Heart left ventricle (tissue), 16 donors: ENCODE measurements at regions of chr5 and their contacts with region 1.

Region 1: GRCh38 chr5:126044111-126044668 is 379.0 kb upstream of the GRAMD2B start:
- DNase-seq: peak in 4 of 5 donors; percentile 38 to 63 (median 52)
- ATAC-seq: peak; percentile 98 to 99 (median 99)
- H3K4me3 ChIP-seq: peak overlapping the region in 5 of 12 donors; percentile 8 to 20 (median 12)
- H3K27ac ChIP-seq: peak overlapping the region; percentile 24 to 87 (median 82)
- H3K4me1 ChIP-seq: peaks cover 0 to 21% (median 8%) of the 10 kb centered on the region in 12 donors
- H3K27me3 ChIP-seq: no peaks in the 10 kb centered on the region
- CTCF ChIP-seq: no peak
- POLR2A ChIP-seq: peak in 1 of 2 donors; percentile 19

Region 2: GRCh38 chr5:126002222-126002897 is 41.8 kb before region 1 on chr5:
- intact Hi-C with region 1: loop called in 1 of 10 experiments (anchors 5 kb)
- DNase-seq: peak; percentile 69 to 83 (median 75)
- ATAC-seq: peak; percentile 85 to 97 (median 94)
- H3K4me3 ChIP-seq: no peak overlapping the region
- H3K27ac ChIP-seq: peak overlapping the region in 11 of 12 donors; percentile 32 to 80 (median 63)
- H3K4me1 ChIP-seq: peaks cover 9 to 43% (median 22%) of the 10 kb centered on the region in 12 donors
- H3K27me3 ChIP-seq: no peaks in the 10 kb centered on the region
- CTCF ChIP-seq: no peak
- POLR2A ChIP-seq: no peak